HepG2 (cell line): ENCODE measurements at regions of chr11 and their contacts with region 1.

Region 1: DNA sequence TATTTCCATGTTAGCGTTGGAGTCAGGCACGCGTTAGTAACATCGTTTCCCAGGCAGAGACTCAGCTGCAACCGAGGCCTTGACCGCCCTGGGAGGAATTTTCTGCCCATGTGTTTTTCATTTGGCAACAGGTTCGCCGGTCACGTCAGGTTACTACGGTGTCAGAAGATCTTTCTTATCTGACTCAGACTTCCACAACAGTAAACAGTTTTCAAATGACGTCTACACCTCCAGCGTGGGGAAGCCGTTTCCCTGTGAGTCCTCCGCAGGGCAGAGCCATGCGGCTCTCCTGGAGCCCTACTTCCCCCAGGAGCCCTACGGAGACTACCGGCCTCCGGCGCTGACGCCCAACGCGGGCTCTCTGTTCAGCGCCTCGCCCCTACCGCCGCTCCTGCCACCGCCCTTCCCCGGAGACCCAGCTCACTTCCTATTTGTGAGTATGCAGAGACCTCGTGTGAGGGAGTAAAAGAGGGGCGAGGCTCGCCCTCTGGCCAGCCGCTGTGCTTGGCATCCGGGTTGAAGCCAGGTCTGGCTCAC is 14.3 kb upstream of the POU2AF3 start:
- DNase-seq: no peak
- ATAC-seq: no peak
- H3K4me3 ChIP-seq: no peak overlapping the region
- H3K27ac ChIP-seq: no peak overlapping the region
- H3K4me1 ChIP-seq: peaks cover 74% of the 10 kb centered on the region
- H3K27me3 ChIP-seq: 0 out of 5 replicates have a peak, but pooled peaks cover 0 to 5% of the 10 kb centered on the region in 2 experiments
- CTCF ChIP-seq: no peak
- EP300 ChIP-seq: no peak
- POLR2A ChIP-seq: no peak
- RAD21 ChIP-seq: no peak

Region 2: DNA sequence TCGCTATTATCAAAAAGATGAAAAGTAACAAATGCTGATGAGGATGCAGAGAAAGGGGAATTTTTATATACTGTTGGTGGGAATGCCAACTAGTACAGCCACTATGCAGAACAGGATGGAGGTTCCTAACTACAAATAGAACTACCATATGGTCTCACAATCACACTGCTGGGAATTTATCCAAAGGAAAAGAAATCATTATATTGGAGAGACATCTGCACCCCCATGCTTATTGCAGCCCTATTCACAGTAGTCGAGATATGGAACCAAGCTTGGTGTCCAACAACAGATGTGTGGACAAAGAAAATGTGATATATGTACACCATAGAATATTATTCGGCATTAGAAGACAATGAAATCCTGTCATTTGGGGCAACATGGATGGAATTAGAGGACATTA is 58.1 kb before region 1 on chr11:
- CTCF ChIA-PET with region 1: no interaction called
- POLR2A ChIA-PET with region 1: no interaction called
- in situ Hi-C with region 1: no loop called
- intact Hi-C with region 1: no loop called
- DNase-seq: no peak
- ATAC-seq: no peak
- H3K4me3 ChIP-seq: no peak overlapping the region
- H3K27ac ChIP-seq: no peak overlapping the region
- H3K4me1 ChIP-seq: peaks cover 2% of the 10 kb centered on the region
- H3K27me3 ChIP-seq: 0 out of 5 replicates have a peak, but pooled peaks cover 0 to under 1% of the 10 kb centered on the region in 2 experiments
- CTCF ChIP-seq: no peak
- EP300 ChIP-seq: no peak
- POLR2A ChIP-seq: no peak
- RAD21 ChIP-seq: no peak

Region 3: GRCh38 chr11:111299101-111300026 is 15.4 kb after region 1 on chr11:
- CTCF ChIA-PET with region 1: interaction called, 3 read pairs
- POLR2A ChIA-PET with region 1: interaction called, 9 read pairs
- in situ Hi-C with region 1: no loop called
- intact Hi-C with region 1: loop called (anchors 2 kb)
- DNase-seq: peak; percentile 46
- ATAC-seq: peak; percentile 94
- H3K4me3 ChIP-seq: peak overlapping the region; percentile 62 to 78 (median 72)
- H3K27ac ChIP-seq: peak overlapping the region; percentile 81
- H3K4me1 ChIP-seq: peaks cover 68% of the 10 kb centered on the region
- H3K27me3 ChIP-seq: no peaks in the 10 kb centered on the region
- CTCF ChIP-seq: peak; percentile 80
- EP300 ChIP-seq: no peak
- POLR2A ChIP-seq: peak; percentile 61 to 66; a peak in 3 of 4 replicates
- RAD21 ChIP-seq: peak; percentile 92

Region 4: GRCh38 chr11:111422494-111423249 is 138.7 kb after region 1 on chr11:
- CTCF ChIA-PET with region 1: interaction called, 108 read pairs
- POLR2A ChIA-PET with region 1: interaction called, 8 read pairs
- in situ Hi-C with region 1: loop called (anchors 5 kb)
- intact Hi-C with region 1: loop called (anchors 1 kb)
- DNase-seq: peak; percentile 82
- ATAC-seq: peak; percentile 98
- H3K4me3 ChIP-seq: no peak overlapping the region
- H3K27ac ChIP-seq: peak overlapping the region; percentile 18
- H3K4me1 ChIP-seq: peaks cover 64% of the 10 kb centered on the region
- H3K27me3 ChIP-seq: no peaks in the 10 kb centered on the region
- CTCF ChIP-seq: peak; percentile 100
- EP300 ChIP-seq: peak; percentile 52 to 66; a peak in 2 of 4 replicates
- POLR2A ChIP-seq: no peak
- RAD21 ChIP-seq: peak; percentile 100

Region 5: DNA sequence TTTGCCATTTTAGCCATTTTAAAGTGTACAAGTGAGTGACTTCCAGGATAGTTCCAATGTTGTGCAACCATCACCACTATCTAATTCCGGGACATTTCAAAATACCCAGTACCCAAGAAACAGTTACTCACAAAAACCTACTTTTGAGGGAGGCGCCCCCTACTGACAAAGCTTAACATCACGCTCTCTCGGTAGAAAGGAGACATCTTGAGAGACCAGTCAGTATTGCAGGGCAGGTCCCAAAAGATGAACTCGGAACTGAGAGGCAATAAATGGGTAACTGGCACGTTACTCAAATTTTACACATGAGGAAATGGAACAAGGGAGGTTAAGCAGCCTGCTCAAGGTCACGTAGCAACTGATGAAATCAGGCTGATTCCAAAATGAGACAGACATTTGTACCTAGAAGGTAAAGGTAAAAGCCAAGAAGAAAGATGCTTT is 145.1 kb after region 1 on chr11:
- CTCF ChIA-PET with region 1: interaction called, 108 read pairs
- POLR2A ChIA-PET with region 1: interaction called, 8 read pairs
- in situ Hi-C with region 1: loop called (anchors 5 kb)
- intact Hi-C with region 1: no loop called
- DNase-seq: peak; percentile 64
- ATAC-seq: peak; percentile 75
- H3K4me3 ChIP-seq: no peak overlapping the region
- H3K27ac ChIP-seq: no peak overlapping the region
- H3K4me1 ChIP-seq: peaks cover 37% of the 10 kb centered on the region
- H3K27me3 ChIP-seq: no peaks in the 10 kb centered on the region
- CTCF ChIP-seq: peak; percentile 73
- EP300 ChIP-seq: no peak; a peak in 1 of 4 replicates
- POLR2A ChIP-seq: no peak
- RAD21 ChIP-seq: peak; percentile 60; the same call in 1 of the 2 replicates

Region 6: GRCh38 chr11:111446404-111447111 is 162.5 kb after region 1 on chr11:
- CTCF ChIA-PET with region 1: interaction called, 36 read pairs
- POLR2A ChIA-PET with region 1: no interaction called
- in situ Hi-C with region 1: no loop called
- intact Hi-C with region 1: loop called (anchors 1 kb)
- DNase-seq: peak; percentile 82
- ATAC-seq: peak; percentile 95
- H3K4me3 ChIP-seq: no peak overlapping the region
- H3K27ac ChIP-seq: no peak overlapping the region
- H3K4me1 ChIP-seq: peaks cover 44% of the 10 kb centered on the region
- H3K27me3 ChIP-seq: peaks cover 3 to 5% of the 10 kb centered on the region in 2 experiments; a peak in 3 of 5 replicates
- CTCF ChIP-seq: peak; percentile 98
- EP300 ChIP-seq: no peak
- POLR2A ChIP-seq: no peak
- RAD21 ChIP-seq: peak; percentile 91